HCT116 (cell line): ENCODE measurements at regions of chr22 and their contacts with region 1.

Region 1: GRCh38 chr22:23281406-23282088 is 101.2 kb downstream of the BCR start:
- DNase-seq: peak; percentile 19
- ATAC-seq: peak; percentile 85
- H3K4me3 ChIP-seq: peak overlapping the region in 1 of 2 experiments; percentile 31; a peak in 1 of 4 replicates
- H3K27ac ChIP-seq: peak overlapping the region; percentile 61
- H3K4me1 ChIP-seq: peaks cover 18 to 23% of the 10 kb centered on the region in 2 experiments
- H3K27me3 ChIP-seq: no peaks in the 10 kb centered on the region
- CTCF ChIP-seq: peak; percentile 82 to 87 (median 86)
- POLR2A ChIP-seq: no peak
- RAD21 ChIP-seq: peak; percentile 82

Region 2: GRCh38 chr22:22952531-22953280 is 328.8 kb before region 1 on chr22:
- CTCF ChIA-PET with region 1: no interaction called
- POLR2A ChIA-PET with region 1: no interaction called
- RAD21 ChIA-PET with region 1: no interaction called
- intact Hi-C with region 1: no loop called
- DNase-seq: no peak
- ATAC-seq: no peak
- H3K4me3 ChIP-seq: no peak overlapping the region
- H3K27ac ChIP-seq: no peak overlapping the region
- H3K4me1 ChIP-seq: no peaks in the 10 kb centered on the region
- H3K27me3 ChIP-seq: peaks cover 5% of the 10 kb centered on the region; the same call in 1 of the 2 replicates
- CTCF ChIP-seq: no peak
- POLR2A ChIP-seq: no peak
- RAD21 ChIP-seq: no peak

Region 3: DNA sequence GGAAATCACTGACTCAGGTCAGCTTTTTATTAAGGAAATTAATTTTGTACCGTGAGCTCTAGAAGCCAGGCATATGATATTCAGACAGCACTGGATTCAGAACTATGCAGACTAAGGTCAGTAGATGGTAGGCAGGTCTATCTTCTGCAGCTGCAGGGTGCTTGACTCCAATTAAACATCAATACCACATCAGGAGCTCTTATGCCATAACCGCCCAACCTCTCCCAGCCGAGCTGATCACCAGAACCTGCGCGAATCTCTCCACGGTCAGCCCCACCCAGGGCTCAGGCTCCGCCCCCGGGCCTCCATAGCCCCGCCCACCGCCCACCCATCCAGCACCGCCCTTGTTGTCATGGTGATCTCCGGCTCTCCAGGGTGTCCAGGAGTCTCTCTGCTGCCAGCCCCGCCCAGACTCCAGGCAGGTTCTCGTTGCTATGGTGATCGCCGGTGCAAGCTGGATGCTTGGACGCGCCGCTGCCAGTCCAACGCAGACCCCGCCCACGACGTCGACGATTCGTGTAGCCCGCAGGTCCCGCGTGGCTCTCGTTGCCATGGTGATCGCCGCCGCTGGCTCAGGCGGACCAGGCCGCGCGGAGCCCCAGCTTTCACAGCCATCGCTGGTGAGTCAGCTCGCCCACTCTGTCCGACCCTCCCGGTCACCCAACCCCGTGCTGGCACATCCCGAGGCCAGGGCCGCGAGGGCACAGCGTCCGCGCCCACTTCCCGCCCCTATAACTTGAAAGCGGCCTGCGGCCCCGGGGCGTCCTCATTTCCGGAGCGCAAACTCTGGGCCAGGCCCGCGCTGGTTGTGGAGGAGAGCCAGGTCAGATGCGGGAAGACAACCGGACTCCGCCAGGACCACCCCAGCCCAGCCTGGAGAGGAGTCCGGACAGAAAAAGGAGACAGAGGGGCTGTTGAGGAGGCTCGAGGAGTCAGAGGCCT is 136.3 kb before region 1 on chr22 and contains the start of gene RAB36:
- CTCF ChIA-PET with region 1: interaction called, 20 read pairs
- POLR2A ChIA-PET with region 1: no interaction called
- RAD21 ChIA-PET with region 1: interaction called in 1 of 2 experiments, 4 read pairs
- intact Hi-C with region 1: no loop called
- DNase-seq: peak; percentile 99
- ATAC-seq: peak; percentile 92
- H3K4me3 ChIP-seq: peak within 1 kb of the TSS; percentile 76
- H3K27ac ChIP-seq: peak within 1 kb of the TSS; percentile 17
- H3K4me1 ChIP-seq: peaks cover 14 to 36% of the 10 kb centered on the region in 2 experiments
- H3K27me3 ChIP-seq: no peaks in the 10 kb centered on the region
- CTCF ChIP-seq: no peak
- POLR2A ChIP-seq: no peak
- RAD21 ChIP-seq: no peak
- total RNA-seq, gene RAB36: 6.1 TPM

Region 4: GRCh38 chr22:23156286-23156685 is 125.3 kb before region 1 on chr22:
- CTCF ChIA-PET with region 1: interaction called, 13 read pairs
- POLR2A ChIA-PET with region 1: no interaction called
- RAD21 ChIA-PET with region 1: no interaction called
- intact Hi-C with region 1: no loop called
- DNase-seq: no peak
- ATAC-seq: peak; percentile 48
- H3K4me3 ChIP-seq: no peak overlapping the region
- H3K27ac ChIP-seq: no peak overlapping the region
- H3K4me1 ChIP-seq: peaks cover 4 to 11% of the 10 kb centered on the region in 2 experiments; a peak in 3 of 4 replicates
- H3K27me3 ChIP-seq: no peaks in the 10 kb centered on the region
- CTCF ChIP-seq: 0 out of 6 replicates have a peak, but pooled peaks of 1 of the 3 experiments have one; percentile 10
- POLR2A ChIP-seq: no peak
- RAD21 ChIP-seq: no peak

Region 5: GRCh38 chr22:23178512-23179254 is 102.9 kb before region 1 on chr22:
- CTCF ChIA-PET with region 1: interaction called, 59 read pairs
- POLR2A ChIA-PET with region 1: interaction called, 3 read pairs
- RAD21 ChIA-PET with region 1: interaction called in 1 of 2 experiments, 9 read pairs
- intact Hi-C with region 1: loop called (anchors 1 kb)
- DNase-seq: peak; percentile 27
- ATAC-seq: peak; percentile 50
- H3K4me3 ChIP-seq: no peak overlapping the region
- H3K27ac ChIP-seq: no peak overlapping the region
- H3K4me1 ChIP-seq: peaks cover 31 to 46% of the 10 kb centered on the region in 2 experiments
- H3K27me3 ChIP-seq: no peaks in the 10 kb centered on the region
- CTCF ChIP-seq: peak; percentile 82 to 98 (median 93)
- POLR2A ChIP-seq: no peak
- RAD21 ChIP-seq: peak; percentile 88

Region 6: DNA sequence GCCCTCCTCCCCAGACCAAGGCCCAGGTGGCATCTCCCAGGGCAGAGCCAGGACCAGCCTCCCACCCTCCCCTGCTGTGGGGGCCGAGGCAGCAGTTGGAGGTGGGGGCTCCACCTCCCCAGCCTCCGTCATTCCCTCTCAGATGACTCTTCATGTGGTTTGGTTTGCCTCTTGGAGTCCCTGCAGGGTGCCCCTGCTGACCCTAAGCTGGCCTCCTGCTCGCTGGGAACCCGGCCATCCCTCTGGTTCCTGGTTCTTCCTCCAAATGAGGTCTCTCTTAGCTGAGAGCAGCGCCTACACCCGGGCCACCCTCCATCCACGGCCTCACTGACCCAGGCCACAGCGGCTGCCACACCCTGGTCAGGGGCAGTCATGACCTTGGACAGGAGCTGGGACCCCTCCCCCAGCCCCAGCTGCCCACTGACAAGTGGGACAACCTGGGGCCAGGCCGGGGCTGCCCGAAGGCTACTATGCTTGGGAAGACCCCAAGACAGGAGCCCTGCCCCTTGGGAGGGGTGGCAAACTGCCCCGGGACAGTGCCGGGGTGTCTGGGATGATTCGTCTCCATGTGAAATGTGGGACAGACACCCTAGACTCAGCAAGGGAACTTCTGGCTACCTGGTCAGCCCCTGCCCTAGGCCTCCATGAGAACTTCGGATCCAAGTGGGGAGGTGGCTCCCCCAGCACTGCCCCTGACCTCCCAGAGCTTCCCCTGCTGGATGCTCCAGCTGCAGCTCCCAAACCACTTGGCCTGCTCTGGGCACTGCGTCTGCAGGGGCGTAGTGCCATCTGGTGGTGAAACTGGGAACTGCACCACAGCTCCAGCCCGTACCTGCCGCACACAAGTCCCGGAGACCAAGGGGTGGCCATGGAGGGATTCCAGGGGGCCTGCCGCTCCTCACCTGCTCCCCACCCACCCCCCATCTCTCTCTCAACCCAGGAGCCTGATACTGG is 104.0 kb after region 1 on chr22:
- CTCF ChIA-PET with region 1: interaction called, 12 read pairs
- POLR2A ChIA-PET with region 1: no interaction called
- RAD21 ChIA-PET with region 1: no interaction called
- intact Hi-C with region 1: no loop called
- DNase-seq: peak; percentile 61
- ATAC-seq: peak; percentile 95
- H3K4me3 ChIP-seq: no peak overlapping the region
- H3K27ac ChIP-seq: no peak overlapping the region; the same call in 1 of the 2 replicates
- H3K4me1 ChIP-seq: no peaks in the 10 kb centered on the region
- H3K27me3 ChIP-seq: no peaks in the 10 kb centered on the region
- CTCF ChIP-seq: peak; percentile 94 to 98 (median 96)
- POLR2A ChIP-seq: no peak
- RAD21 ChIP-seq: peak; percentile 93